Right cardiac atrium (tissue), 5 donors: ENCODE measurements at regions of chr13 and their contacts with region 1.

Region 1: DNA sequence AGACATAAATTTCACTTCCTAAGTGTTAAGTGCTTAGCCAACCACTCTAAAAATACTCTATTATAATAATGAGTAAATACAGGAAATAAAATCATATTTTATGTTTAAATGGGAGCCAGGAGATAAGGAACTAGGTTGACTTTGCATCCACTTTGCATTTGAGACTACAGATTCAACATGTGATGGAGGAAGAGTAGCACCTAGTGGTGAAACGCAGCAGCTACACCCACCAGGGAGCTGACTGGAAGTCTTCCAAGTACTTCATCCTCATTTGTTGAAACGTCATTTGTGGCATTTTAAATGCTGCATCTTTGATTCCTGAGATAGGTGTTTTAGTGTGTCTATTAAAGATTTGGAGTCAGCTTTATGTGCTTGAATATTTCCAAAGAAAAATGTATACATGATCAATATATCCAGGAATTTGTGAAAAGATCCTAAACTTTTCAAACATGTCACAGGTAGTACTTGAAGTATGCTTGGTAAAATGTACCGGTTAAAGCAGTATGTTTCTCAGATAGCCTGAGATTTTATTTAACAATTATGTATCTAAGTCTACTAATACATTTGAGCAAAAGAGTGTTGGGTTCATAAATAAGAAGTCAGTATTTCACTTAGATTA is 17.4 kb upstream of the KCTD12 start:
- DNase-seq: peak; percentile 33 to 74 (median 56)
- ATAC-seq: peak; percentile 83 to 84
- H3K4me3 ChIP-seq: no peak overlapping the region
- H3K27ac ChIP-seq: no peak overlapping the region
- H3K4me1 ChIP-seq: no peaks in the 10 kb centered on the region
- H3K27me3 ChIP-seq: no peaks in the 10 kb centered on the region

Region 2: DNA sequence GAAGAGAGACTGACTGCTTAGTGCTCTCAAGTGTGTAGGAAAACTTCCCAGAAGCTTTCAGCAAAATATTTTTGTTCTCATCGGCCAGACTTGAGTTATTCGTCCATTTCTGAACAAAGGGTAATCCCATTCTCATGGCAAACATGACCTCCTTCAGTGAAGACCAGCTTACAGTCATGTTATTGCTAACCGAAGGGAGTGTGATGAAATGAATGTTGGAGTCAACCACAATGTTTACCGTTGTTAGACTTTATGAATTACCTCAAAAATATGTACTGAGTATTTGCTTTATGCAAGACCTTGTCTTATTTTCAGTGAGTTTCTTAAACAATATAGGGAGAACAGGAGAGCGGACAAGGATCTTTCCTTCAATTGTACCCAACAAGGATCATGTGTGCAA is 1038.9 kb before region 1 on chr13:
- intact Hi-C with region 1: loop called in 1 of 4 experiments (anchors 5 kb)
- DNase-seq: no peak
- ATAC-seq: no peak
- H3K4me3 ChIP-seq: no peak overlapping the region
- H3K27ac ChIP-seq: no peak overlapping the region
- H3K4me1 ChIP-seq: no peaks in the 10 kb centered on the region
- H3K27me3 ChIP-seq: no peaks in the 10 kb centered on the region

Region 3: DNA sequence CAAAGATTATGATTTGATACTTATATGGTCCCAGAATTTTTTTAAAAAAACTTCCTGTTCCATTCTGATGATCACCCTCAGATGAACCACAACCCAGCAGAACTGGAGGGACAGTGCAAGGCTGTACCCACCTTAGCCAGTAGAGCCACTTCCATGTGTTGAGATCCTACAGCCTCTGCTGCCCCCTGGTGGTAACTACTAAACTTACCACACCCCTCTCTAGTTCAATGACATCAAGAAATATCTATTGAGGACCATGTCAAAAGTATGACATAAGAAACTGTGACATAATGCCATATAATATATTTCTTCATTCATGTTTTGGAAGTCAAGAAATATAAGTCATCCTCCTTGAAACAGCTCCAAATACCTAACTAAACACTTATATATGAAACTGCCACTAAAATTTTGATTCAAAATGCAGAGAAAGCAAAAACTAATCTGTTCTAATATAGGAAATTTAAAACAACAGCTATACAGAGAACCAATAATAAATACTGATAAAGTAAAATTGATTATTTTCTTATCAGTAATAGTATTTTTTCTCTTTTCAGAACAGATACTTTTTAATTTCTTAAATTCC is 430.0 kb before region 1 on chr13:
- intact Hi-C with region 1: loop called in 1 of 4 experiments (anchors 10 kb)
- DNase-seq: peak; percentile 58 to 68 (median 64)
- ATAC-seq: peak; percentile 94 to 97
- H3K4me3 ChIP-seq: no peak overlapping the region
- H3K27ac ChIP-seq: no peak overlapping the region
- H3K4me1 ChIP-seq: no peaks in the 10 kb centered on the region
- H3K27me3 ChIP-seq: no peaks in the 10 kb centered on the region

Region 4: DNA sequence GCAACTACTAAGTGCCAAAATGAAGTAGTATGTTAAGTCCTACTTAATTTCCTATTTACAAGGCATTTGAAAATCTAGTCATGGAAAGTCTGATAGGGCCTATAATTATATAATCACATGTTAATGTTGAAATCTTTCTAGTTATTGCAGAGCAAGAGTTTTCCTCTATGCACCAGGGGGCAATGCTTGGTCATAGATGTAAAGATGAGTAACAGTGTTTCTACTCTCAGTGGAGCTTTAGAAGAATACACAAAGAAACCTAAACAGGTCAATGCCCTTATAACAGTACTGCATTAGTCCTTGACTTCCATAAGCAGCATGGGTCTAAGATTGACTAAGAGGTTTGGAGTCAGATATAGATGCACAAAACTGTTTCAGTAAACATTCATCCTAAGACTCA is 236.1 kb before region 1 on chr13:
- intact Hi-C with region 1: loop called in 3 of 4 experiments (anchors 5 to 10 kb)
- DNase-seq: no peak
- ATAC-seq: peak; percentile 78 to 89
- H3K4me3 ChIP-seq: no peak overlapping the region
- H3K27ac ChIP-seq: no peak overlapping the region
- H3K4me1 ChIP-seq: no peaks in the 10 kb centered on the region
- H3K27me3 ChIP-seq: no peaks in the 10 kb centered on the region